Posterior vena cava (tissue), 2 donors: ENCODE measurements at regions of chr19 and their contacts with region 1.

Region 1: GRCh38 chr19:20928371-20928770 is 5.3 kb downstream of the ZNF85 start:
- DNase-seq: no peak

Region 2: DNA sequence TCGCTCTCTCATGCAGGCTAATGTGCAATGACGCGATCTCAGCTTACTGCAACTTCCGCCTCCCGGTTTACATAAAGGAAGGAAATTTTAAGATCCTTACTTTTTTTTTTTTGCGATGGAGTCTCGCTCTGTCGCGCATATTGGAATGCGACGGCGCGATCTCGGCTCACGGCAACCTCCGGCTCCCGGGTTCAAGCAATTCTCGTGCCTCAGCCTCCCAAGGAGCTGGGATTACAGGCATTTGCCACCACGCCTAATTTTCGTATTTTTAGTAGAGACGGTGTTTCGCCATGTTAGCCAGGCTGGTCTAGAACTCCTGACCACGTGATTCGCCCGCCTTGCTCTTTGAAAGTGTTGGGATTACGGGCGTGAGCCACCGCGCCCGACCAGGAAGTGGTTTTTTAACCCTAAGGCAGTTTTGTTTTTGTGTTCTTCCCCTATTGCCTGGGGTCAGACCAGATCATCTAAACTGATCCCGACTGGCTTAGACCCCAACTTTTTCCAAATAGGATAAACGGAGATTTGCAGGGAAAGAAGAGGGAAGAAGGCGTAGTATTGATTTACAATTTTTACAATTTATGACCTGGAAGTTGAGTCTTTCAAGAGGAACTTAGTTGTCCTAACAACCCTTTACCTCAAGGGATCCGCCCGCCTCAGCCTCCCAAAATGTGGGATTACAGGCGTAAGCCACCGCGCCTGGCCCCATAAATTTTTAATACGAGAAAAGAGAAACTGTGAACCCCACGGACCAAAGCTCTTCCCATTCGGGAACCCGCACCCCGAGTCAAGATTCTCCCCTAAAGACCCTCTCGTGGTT is 504.8 kb before region 1 on chr19:
- intact Hi-C with region 1: loop called in 1 of 2 experiments (anchors 5 kb)
- DNase-seq: peak; percentile 86